Endothelial cell of umbilical vein (primary cell): ENCODE measurements at regions of chr12 and their contacts with region 1.

Region 1: GRCh38 chr12:68807576-68808387 is at the start of gene MDM2:
- DNase-seq: peak; percentile 88
- H3K4me3 ChIP-seq: peak within 1 kb of the TSS; percentile 57 to 82 (median 68)
- H3K27ac ChIP-seq: peak within 1 kb of the TSS; percentile 82
- H3K4me1 ChIP-seq: peaks cover 3% of the 10 kb centered on the region
- H3K27me3 ChIP-seq: no peaks in the 10 kb centered on the region
- CTCF ChIP-seq: peak; percentile 83 to 87
- POLR2A ChIP-seq: peak; percentile 73
- total RNA-seq, gene MDM2: 270 and 276 TPM in 2 replicates

Region 2: DNA sequence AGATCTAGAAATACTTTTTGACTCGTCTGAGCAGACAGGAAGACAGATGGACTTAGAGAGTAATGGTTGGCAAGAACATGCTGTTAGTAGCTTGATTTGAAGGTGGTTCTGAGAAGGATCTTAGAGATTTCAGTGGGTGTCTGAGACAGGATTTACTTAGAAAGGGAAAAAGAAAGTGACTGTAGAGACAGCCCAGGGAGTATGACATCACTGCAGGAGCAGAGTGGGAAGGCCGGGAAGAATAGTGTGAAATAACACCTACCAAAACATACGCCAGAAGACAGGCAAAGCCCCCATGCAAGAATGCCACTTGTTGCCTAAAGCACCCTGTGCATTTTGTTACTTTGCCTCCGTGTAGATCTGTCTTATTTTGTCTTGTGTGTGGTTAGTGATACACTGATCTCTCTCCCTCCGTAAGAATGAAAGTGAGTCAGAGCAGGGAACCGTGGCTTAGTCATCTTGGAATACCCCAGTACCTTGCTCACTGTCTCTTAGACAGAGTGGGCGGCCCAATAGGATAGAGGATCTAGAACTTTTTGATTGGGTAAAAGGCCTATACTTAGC is 979.9 kb before region 1 on chr12:
- CTCF ChIA-PET with region 1: no interaction called
- POLR2A ChIA-PET with region 1: no interaction called
- dilution Hi-C with region 1: no loop called
- intact Hi-C with region 1: no loop called
- DNase-seq: peak; percentile 67
- H3K4me3 ChIP-seq: peak overlapping the region in 2 of 3 experiments; percentile 16 to 24
- H3K27ac ChIP-seq: no peak overlapping the region
- H3K4me1 ChIP-seq: no peaks in the 10 kb centered on the region
- H3K27me3 ChIP-seq: no peaks in the 10 kb centered on the region
- CTCF ChIP-seq: no peak
- POLR2A ChIP-seq: no peak

Region 3: GRCh38 chr12:68223083-68223747 is 584.6 kb before region 1 on chr12:
- CTCF ChIA-PET with region 1: no interaction called
- POLR2A ChIA-PET with region 1: no interaction called
- dilution Hi-C with region 1: no loop called
- intact Hi-C with region 1: loop called (anchors 10 kb)
- DNase-seq: peak; percentile 88
- H3K4me3 ChIP-seq: no peak overlapping the region
- H3K27ac ChIP-seq: no peak overlapping the region
- H3K4me1 ChIP-seq: peaks cover 6% of the 10 kb centered on the region
- H3K27me3 ChIP-seq: peaks cover 0 to 2% of the 10 kb centered on the region in 2 experiments
- CTCF ChIP-seq: peak; percentile 84 to 86
- POLR2A ChIP-seq: no peak

Region 4: DNA sequence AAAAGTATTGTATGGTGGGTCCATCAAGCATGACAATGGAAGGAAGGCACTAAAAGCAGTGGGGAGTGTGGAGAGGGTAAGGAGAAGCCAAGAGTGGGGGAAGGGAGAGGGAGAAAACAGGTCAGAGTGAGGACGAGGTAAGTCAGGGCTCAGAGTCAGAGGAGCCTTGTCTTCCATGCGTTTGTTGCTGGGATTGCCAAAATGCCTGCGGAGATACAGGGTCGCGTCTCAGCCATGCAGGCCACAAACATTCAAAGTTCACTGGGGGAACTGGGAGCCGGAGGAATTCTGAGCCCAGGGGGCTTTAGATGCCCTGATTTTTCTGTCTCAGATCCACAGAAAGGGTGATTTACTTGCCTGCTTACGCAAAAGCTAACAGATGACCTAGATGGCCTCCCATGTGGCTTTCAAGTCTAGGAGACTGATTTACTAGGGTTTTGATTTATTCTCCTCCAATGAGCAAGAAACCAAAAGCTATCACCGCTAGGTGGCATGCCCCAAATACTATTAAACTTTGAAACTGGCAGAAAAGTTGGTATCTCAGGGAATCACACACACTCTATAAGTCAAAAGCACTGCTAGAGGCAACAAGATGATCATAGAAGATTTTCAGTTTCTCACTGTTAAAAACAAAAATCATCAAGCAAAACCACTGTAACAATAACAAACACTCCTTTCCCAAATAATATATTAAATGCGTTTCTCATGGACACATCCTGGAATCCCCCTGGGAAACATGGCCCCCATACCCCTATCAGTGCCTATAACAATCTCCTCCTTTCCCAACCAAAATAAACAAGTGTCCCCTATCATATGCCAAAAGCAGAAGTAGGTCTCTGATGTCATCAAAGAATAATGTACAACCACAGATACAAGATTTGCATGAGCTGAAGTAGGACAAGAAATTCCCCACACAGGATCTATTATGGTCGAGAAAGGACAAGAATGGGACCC is 449.0 kb before region 1 on chr12:
- CTCF ChIA-PET with region 1: no interaction called
- POLR2A ChIA-PET with region 1: no interaction called
- dilution Hi-C with region 1: no loop called
- intact Hi-C with region 1: loop called (anchors 5 kb)
- DNase-seq: peak; percentile 83
- H3K4me3 ChIP-seq: no peak overlapping the region
- H3K27ac ChIP-seq: no peak overlapping the region
- H3K4me1 ChIP-seq: no peaks in the 10 kb centered on the region
- H3K27me3 ChIP-seq: no peaks in the 10 kb centered on the region
- CTCF ChIP-seq: peak; percentile 45 to 58
- POLR2A ChIP-seq: no peak

Region 5: DNA sequence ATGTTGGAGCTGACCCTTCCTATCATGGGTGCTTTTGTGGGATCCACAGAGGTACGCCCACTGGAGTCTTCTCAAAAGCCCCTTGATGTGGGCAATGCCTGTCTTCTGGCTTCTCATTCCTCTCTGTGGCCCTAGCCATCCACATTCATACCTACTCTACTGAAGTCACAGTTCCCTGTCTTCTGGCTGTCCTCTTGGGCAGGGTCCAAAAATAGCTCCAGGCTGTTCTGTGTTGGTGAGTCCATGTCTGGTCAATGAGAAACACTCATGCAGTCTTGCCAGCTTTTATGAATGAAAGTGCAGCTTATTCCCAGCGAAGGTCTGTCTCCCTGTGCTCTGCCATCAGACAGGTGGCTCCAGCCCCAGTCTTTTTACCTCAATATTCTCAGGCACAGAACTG is 339.7 kb before region 1 on chr12:
- CTCF ChIA-PET with region 1: no interaction called
- POLR2A ChIA-PET with region 1: no interaction called
- dilution Hi-C with region 1: no loop called
- intact Hi-C with region 1: no loop called
- DNase-seq: no peak
- H3K4me3 ChIP-seq: no peak overlapping the region
- H3K27ac ChIP-seq: no peak overlapping the region
- H3K4me1 ChIP-seq: no peaks in the 10 kb centered on the region
- H3K27me3 ChIP-seq: no peaks in the 10 kb centered on the region
- CTCF ChIP-seq: no peak
- POLR2A ChIP-seq: no peak

Region 6: DNA sequence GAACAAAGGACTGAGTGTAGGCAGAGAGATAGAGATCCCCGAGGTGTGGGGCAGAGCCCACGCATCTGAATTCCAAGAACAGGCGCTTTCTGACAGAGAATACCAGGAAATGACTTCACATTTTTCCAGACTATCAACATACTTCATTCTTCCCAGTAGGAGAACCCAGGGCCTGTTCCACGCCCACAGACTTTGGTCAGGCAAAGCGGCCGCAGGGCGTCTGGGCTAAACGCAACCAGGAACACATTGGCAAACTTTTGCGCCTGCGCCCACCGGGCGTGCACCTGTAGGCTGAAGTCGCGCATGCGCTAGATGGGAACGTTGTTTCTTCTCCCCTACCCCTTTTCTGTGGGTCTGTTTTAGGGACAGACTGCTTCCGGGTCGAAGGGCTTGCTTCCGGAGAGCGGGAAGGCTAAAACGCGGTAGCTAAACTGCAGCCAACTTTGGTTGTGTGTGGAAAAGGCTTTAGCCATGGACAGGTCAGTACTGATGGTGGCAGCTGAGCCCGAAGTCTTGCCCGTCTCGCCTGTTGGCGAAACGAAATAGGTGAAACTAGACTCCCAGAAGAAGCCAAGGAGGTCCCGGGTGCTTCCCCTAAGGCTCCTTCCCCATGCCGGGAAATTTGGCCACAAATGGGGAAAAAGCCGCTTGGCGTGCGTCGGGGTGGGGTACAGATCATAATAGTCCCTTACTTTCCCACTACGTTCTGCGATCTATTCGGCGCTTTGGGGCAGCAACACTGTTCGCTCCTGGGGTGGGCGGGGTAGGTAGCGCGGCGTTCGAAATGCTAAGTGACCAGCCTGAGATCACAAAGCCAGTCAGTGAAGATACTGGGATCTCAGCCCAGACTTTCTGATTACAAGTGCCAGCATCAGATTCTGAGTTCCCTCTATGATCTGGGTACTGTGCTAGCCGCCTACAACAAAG is 120.9 kb before region 1 on chr12 and contains the start of gene NUP107:
- CTCF ChIA-PET with region 1: no interaction called
- POLR2A ChIA-PET with region 1: no interaction called
- dilution Hi-C with region 1: no loop called
- intact Hi-C with region 1: loop called (anchors 1 kb)
- DNase-seq: peak; percentile 100
- H3K4me3 ChIP-seq: peak within 1 kb of the TSS; percentile 44 to 84 (median 76)
- H3K27ac ChIP-seq: peak within 1 kb of the TSS; percentile 90
- H3K4me1 ChIP-seq: peaks cover 19% of the 10 kb centered on the region
- H3K27me3 ChIP-seq: no peaks in the 10 kb centered on the region
- CTCF ChIP-seq: peak in 1 of 2 donors; percentile 8
- POLR2A ChIP-seq: peak; percentile 97
- total RNA-seq, gene NUP107: 64.0 and 78.7 TPM in 2 replicates

Region 7: DNA sequence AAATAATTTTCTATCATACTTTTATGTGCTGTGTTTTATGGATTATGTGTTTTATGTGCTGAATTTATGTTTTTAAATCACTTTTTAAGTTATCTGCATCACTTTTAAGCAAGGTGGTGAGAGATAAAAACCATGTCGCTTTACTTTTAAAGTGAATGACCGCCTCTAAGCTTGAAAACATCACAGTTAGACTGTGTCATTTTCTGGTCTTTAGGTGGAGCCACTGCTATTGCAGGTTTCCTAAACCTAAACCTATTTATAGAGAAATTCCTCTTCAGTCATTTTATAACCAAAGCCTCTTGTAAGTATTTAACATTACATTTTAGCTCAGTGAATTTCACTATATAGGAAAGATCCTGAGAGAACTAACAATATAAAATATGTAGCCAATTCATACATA is 20.9 kb before region 1 on chr12:
- CTCF ChIA-PET with region 1: interaction called, 35 read pairs
- POLR2A ChIA-PET with region 1: interaction called, 21 read pairs
- dilution Hi-C with region 1: no loop called
- intact Hi-C with region 1: loop called (anchors 1 kb)
- DNase-seq: no peak
- H3K4me3 ChIP-seq: no peak overlapping the region
- H3K27ac ChIP-seq: peak overlapping the region; percentile 87
- H3K4me1 ChIP-seq: peaks cover 18% of the 10 kb centered on the region
- H3K27me3 ChIP-seq: no peaks in the 10 kb centered on the region
- CTCF ChIP-seq: no peak
- POLR2A ChIP-seq: no peak

Region 8: DNA sequence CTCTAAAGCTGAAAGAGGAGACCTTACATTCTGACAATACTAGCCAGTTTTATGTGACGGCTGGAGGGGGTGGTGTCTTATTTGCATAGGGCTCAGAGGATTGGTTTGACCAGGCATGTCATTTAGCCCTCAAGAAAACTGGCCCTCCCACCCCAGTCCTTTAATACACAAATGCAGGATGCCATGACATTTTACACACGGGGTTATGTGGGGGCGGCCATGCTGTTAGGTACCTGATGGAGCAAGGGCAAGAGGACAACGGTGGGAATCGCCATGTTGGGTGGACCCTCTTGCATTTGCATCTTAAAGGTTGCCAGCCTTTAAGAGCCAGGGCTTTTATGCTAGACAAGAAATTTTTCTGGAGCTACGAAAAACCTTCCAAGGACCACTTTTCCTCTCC is 23.5 kb after region 1 on chr12:
- CTCF ChIA-PET with region 1: interaction called, 11 read pairs
- POLR2A ChIA-PET with region 1: interaction called, 10 read pairs
- dilution Hi-C with region 1: no loop called
- intact Hi-C with region 1: no loop called
- DNase-seq: no peak
- H3K4me3 ChIP-seq: no peak overlapping the region
- H3K27ac ChIP-seq: no peak overlapping the region
- H3K4me1 ChIP-seq: peaks cover 4% of the 10 kb centered on the region
- H3K27me3 ChIP-seq: no peaks in the 10 kb centered on the region
- CTCF ChIP-seq: no peak
- POLR2A ChIP-seq: no peak

Region 9: DNA sequence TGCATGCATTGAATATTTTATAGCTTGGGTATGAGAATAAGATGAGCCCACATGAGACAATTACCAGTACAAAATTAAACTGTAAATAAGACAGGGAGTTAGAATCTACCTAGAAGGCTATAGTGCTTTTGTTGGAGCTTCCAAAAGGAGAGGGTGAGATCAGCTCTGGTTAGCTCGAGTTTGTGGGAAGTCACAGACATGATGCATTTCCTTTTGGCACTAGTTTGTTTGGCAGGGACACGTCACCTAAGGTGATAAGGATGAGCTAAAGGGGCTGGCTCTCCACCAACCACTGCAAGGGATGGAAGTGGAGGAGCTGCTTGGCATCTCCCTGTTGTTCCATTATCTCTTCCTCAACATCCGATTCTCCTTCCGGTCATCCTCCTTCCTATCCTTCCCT is 173.7 kb after region 1 on chr12:
- CTCF ChIA-PET with region 1: no interaction called
- POLR2A ChIA-PET with region 1: no interaction called
- dilution Hi-C with region 1: no loop called
- intact Hi-C with region 1: no loop called
- DNase-seq: no peak
- H3K4me3 ChIP-seq: no peak overlapping the region
- H3K27ac ChIP-seq: no peak overlapping the region
- H3K4me1 ChIP-seq: no peaks in the 10 kb centered on the region
- H3K27me3 ChIP-seq: peaks cover 0 to 5% of the 10 kb centered on the region in 2 experiments
- CTCF ChIP-seq: no peak
- POLR2A ChIP-seq: no peak